SK-N-SH (cell line): ENCODE measurements at regions of chr1 and their contacts with region 1.

Region 1: GRCh38 chr1:27332536-27333281 is 9.1 kb upstream of the SYTL1 start:
- DNase-seq: peak; percentile 87
- H3K4me3 ChIP-seq: no peak overlapping the region; a peak in 1 of 4 replicates
- H3K27ac ChIP-seq: no peak overlapping the region
- H3K4me1 ChIP-seq: no peaks in the 10 kb centered on the region
- H3K27me3 ChIP-seq: no peaks in the 10 kb centered on the region
- CTCF ChIP-seq: peak; percentile 85
- EP300 ChIP-seq: no peak
- RAD21 ChIP-seq: peak; percentile 48

Region 2: GRCh38 chr1:27235827-27236226 is 96.9 kb before region 1 on chr1:
- CTCF ChIA-PET with region 1: no interaction called
- POLR2A ChIA-PET with region 1: no interaction called
- DNase-seq: no peak
- H3K4me3 ChIP-seq: peak overlapping the region; percentile 63 to 70
- H3K27ac ChIP-seq: no peak overlapping the region; a peak in 1 of 4 replicates
- H3K4me1 ChIP-seq: peaks cover 8 to 15% of the 10 kb centered on the region in 2 experiments; a peak in 3 of 4 replicates
- H3K27me3 ChIP-seq: no peaks in the 10 kb centered on the region
- CTCF ChIP-seq: no peak
- EP300 ChIP-seq: no peak
- RAD21 ChIP-seq: no peak

Region 3: DNA sequence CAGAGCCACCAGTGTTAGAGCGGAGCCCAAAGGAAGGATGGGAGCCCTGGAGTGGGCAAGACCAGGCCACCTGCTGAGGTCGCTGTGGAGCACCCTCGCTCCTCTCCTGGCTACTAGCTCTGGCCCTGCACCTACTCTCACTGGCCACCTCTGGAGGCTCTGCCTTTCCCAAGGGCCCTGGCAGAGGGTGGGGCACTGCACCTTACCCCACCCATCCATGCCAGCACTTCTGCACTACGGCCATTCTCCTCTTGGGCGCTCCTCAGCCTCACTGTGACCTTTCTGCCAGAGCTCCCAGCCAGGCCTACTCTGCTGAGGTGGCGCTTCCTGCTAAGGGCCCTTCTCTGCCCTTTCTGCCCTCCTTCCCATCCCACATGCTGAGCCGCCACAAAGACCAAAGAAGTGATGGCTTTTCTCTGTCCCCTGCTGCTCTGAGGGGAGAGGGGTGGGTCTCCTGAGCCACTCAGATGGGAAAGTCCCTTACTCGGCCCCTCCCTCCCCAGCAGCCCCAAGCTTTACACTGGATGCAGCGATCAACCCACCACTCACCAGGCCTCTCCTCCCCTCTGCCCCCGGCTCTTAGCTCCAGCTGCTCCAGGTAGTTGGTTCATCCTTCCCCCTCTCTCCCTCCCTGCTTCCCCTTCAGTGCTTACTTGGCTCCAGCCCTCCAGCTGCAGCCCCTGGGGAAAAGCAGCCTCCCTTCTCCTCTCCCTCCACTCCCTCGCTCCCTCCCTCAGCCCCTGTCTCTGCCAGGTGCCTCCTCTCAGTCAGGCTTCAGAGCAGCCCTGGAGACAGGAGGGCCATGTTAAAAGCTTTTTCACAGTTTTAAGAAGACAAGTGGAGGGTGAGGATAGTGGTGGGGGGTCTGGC is 25.6 kb before region 1 on chr1:
- CTCF ChIA-PET with region 1: interaction called, 185 read pairs
- POLR2A ChIA-PET with region 1: no interaction called
- DNase-seq: no peak
- H3K4me3 ChIP-seq: no peak overlapping the region
- H3K27ac ChIP-seq: no peak overlapping the region
- H3K4me1 ChIP-seq: no peaks in the 10 kb centered on the region
- H3K27me3 ChIP-seq: no peaks in the 10 kb centered on the region
- CTCF ChIP-seq: no peak
- EP300 ChIP-seq: no peak
- RAD21 ChIP-seq: no peak

Region 4: GRCh38 chr1:27321813-27322577 is 10.7 kb before region 1 on chr1 and contains the start of gene TMEM222:
- CTCF ChIA-PET with region 1: interaction called, 13 read pairs
- POLR2A ChIA-PET with region 1: no interaction called
- DNase-seq: peak; percentile 98
- H3K4me3 ChIP-seq: peak within 1 kb of the TSS; percentile 95 to 100
- H3K27ac ChIP-seq: peak within 1 kb of the TSS; percentile 79 to 92
- H3K4me1 ChIP-seq: peaks cover 11 to 24% of the 10 kb centered on the region in 2 experiments; a peak in 3 of 4 replicates
- H3K27me3 ChIP-seq: no peaks in the 10 kb centered on the region
- CTCF ChIP-seq: no peak
- EP300 ChIP-seq: peak; percentile 20 to 57; a peak in 2 of 4 replicates
- RAD21 ChIP-seq: no peak
- polyA plus RNA-seq, gene TMEM222: 51.7 and 52.0 TPM in 2 replicates

Region 5: GRCh38 chr1:27349784-27350662 is 17.3 kb after region 1 on chr1:
- CTCF ChIA-PET with region 1: interaction called, 85 read pairs
- POLR2A ChIA-PET with region 1: interaction called, 5 read pairs
- DNase-seq: peak; percentile 94
- H3K4me3 ChIP-seq: peak overlapping the region in 1 of 2 experiments; percentile 39; a peak in 2 of 4 replicates
- H3K27ac ChIP-seq: no peak overlapping the region
- H3K4me1 ChIP-seq: peaks cover 0 to 10% of the 10 kb centered on the region in 2 experiments; a peak in 1 of 4 replicates
- H3K27me3 ChIP-seq: no peaks in the 10 kb centered on the region
- CTCF ChIP-seq: no peak
- EP300 ChIP-seq: no peak
- RAD21 ChIP-seq: no peak

Region 6: GRCh38 chr1:27545271-27545670 is 212.6 kb after region 1 on chr1:
- CTCF ChIA-PET with region 1: no interaction called
- POLR2A ChIA-PET with region 1: no interaction called
- DNase-seq: no peak
- H3K4me3 ChIP-seq: no peak overlapping the region
- H3K27ac ChIP-seq: no peak overlapping the region; a peak in 1 of 4 replicates
- H3K4me1 ChIP-seq: peaks cover 16 to 35% of the 10 kb centered on the region in 2 experiments; a peak in 3 of 4 replicates
- H3K27me3 ChIP-seq: no peaks in the 10 kb centered on the region
- CTCF ChIP-seq: no peak
- EP300 ChIP-seq: no peak
- RAD21 ChIP-seq: no peak